HepG2 (cell line): ENCODE measurements at regions of chr4 and their contacts with region 1.

Region 1: DNA sequence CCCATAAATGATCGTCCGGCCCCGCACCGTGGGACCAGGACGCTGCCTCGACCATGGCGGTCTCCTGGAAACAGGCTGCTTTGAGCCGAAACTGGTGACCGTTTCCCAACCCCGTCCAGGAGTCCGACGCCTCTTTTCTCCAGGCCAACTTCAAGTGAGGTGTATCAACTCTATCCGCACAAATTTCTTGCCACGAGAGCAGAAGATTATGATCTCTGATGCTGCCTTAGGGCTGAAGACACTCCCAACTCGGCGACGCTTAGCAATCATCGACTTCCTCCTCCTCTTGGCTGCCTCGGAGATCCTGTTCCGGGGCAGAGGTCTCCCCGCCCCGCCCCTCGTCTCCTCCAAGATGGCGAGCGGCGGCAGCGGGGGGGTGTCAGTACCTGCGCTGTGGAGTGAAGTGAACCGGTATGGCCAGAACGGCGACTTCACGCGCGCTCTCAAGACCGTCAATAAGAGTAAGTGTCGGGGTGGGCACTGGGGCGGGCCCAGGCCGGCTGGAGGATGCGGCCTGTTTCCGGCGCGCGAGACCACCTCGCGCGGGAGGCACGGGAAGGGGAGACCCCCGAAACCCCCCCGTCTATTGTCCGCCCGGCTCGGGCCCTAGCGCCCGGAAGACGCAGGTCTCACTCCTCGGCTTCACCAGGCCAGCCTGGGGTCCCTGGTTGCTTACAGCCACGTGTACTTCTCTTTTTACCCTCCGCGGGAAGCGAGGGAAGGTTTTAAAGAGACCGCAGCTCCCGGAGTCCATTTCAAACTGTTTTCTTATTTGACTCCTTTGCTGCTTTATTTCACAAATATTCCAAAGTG is at the start of gene SRP72:
- DNase-seq: peak; percentile 82
- ATAC-seq: peak; percentile 91
- H3K4me3 ChIP-seq: peak within 1 kb of the TSS; percentile 79 to 90 (median 83)
- H3K27ac ChIP-seq: peak within 1 kb of the TSS; percentile 83
- H3K4me1 ChIP-seq: peaks cover 25% of the 10 kb centered on the region
- H3K27me3 ChIP-seq: no peaks in the 10 kb centered on the region; a peak in 1 of 5 replicates
- CTCF ChIP-seq: no peak
- EP300 ChIP-seq: no peak
- POLR2A ChIP-seq: peak; percentile 88 to 91
- RAD21 ChIP-seq: no peak
- total RNA-seq, gene SRP72: 75.6 and 126 TPM in 2 replicates

Region 2: DNA sequence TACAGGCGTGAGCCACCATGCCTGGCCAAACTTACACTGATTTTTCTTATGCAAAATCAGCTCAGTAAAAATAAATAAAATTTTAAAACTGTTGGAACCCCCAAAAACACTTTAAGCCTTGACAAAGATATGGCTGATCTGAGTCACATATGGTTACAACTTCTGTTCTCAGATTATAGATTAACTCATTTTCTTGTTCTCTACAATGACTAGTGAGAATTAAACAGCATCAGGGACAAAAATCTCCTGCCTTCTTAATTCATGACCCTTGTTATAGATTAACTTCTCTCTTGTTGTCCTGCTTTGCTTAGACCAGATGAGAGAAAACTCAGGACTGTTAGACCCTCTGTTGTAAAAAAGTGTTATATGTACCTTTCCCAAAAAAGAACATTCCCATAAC is 672.1 kb before region 1 on chr4:
- CTCF ChIA-PET with region 1: no interaction called
- POLR2A ChIA-PET with region 1: no interaction called
- in situ Hi-C with region 1: no loop called
- intact Hi-C with region 1: no loop called
- DNase-seq: no peak
- ATAC-seq: no peak
- H3K4me3 ChIP-seq: no peak overlapping the region
- H3K27ac ChIP-seq: no peak overlapping the region
- H3K4me1 ChIP-seq: no peaks in the 10 kb centered on the region
- H3K27me3 ChIP-seq: no peaks in the 10 kb centered on the region
- CTCF ChIP-seq: no peak
- EP300 ChIP-seq: no peak
- POLR2A ChIP-seq: no peak
- RAD21 ChIP-seq: no peak

Region 3: GRCh38 chr4:56387023-56388001 is 80.2 kb before region 1 on chr4 and contains the start of gene AASDH:
- CTCF ChIA-PET with region 1: no interaction called
- POLR2A ChIA-PET with region 1: interaction called, 10 read pairs
- in situ Hi-C with region 1: no loop called
- intact Hi-C with region 1: no loop called
- DNase-seq: peak; percentile 88
- ATAC-seq: peak; percentile 92
- H3K4me3 ChIP-seq: peak within 1 kb of the TSS; percentile 71 to 87 (median 85)
- H3K27ac ChIP-seq: peak within 1 kb of the TSS; percentile 97
- H3K4me1 ChIP-seq: peaks cover 28% of the 10 kb centered on the region
- H3K27me3 ChIP-seq: no peaks in the 10 kb centered on the region; a peak in 1 of 5 replicates
- CTCF ChIP-seq: 0 out of 2 replicates have a peak, but pooled peaks have one; percentile 11
- EP300 ChIP-seq: 0 out of 4 replicates have a peak, but pooled peaks of 1 of the 2 experiments have one; percentile 16
- POLR2A ChIP-seq: peak; percentile 91 to 96
- RAD21 ChIP-seq: peak; percentile 27; the same call in 1 of the 2 replicates
- total RNA-seq, gene AASDH: 12.6 and 16.8 TPM in 2 replicates

Region 4: DNA sequence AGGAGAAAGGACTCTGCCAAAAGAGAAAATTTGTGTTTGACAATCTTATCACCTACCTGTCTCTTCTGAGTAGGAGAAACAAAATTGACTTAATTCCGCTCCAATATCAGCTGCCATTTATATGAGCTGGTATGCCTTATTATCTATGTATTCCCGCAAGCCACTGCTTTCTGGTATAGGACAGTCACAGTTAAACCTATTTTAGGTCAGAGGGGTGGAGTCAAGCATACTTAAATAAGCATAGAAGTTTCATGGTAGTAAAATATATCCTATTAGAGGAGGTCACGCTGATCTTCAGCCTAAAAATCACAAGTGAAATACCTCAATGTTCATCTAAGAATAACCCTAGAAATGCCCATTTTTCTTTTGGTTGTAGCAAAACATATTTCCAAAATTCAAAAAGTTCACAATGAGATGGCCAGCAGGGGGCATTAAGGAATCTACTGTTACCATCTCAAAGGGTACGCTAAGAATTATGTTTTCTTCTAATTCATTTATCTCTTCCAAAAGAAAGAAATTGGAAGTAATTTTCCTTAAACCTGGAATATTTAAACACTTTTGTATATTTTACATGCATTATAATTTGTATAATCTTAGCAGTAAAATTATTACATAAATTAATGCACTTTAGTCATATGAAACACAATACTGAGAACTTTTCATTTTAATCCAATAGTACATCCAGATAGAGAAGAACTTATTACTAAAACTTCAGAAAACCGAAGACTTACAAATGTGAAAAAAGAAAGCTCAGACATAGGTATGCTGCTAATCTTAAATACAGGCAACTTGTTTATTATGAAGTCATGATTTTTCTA is 42.6 kb before region 1 on chr4:
- CTCF ChIA-PET with region 1: no interaction called
- POLR2A ChIA-PET with region 1: no interaction called
- in situ Hi-C with region 1: no loop called
- intact Hi-C with region 1: loop called (anchors 5 kb)
- DNase-seq: no peak
- ATAC-seq: no peak
- H3K4me3 ChIP-seq: no peak overlapping the region
- H3K27ac ChIP-seq: no peak overlapping the region
- H3K4me1 ChIP-seq: peaks cover 26% of the 10 kb centered on the region
- H3K27me3 ChIP-seq: no peaks in the 10 kb centered on the region
- CTCF ChIP-seq: peak; percentile 44
- EP300 ChIP-seq: no peak
- POLR2A ChIP-seq: no peak
- RAD21 ChIP-seq: no peak

Region 5: GRCh38 chr4:56445699-56446098 is 21.8 kb before region 1 on chr4:
- CTCF ChIA-PET with region 1: no interaction called
- POLR2A ChIA-PET with region 1: interaction called, 5 read pairs
- in situ Hi-C with region 1: no loop called
- intact Hi-C with region 1: loop called (anchors 2 kb)
- DNase-seq: no peak
- ATAC-seq: no peak
- H3K4me3 ChIP-seq: no peak overlapping the region
- H3K27ac ChIP-seq: no peak overlapping the region
- H3K4me1 ChIP-seq: peaks cover 52% of the 10 kb centered on the region
- H3K27me3 ChIP-seq: no peaks in the 10 kb centered on the region
- CTCF ChIP-seq: no peak
- EP300 ChIP-seq: no peak
- POLR2A ChIP-seq: no peak; a peak in 1 of 4 replicates
- RAD21 ChIP-seq: no peak

Region 6: GRCh38 chr4:56544573-56545131 is 77.2 kb after region 1 on chr4:
- CTCF ChIA-PET with region 1: no interaction called
- POLR2A ChIA-PET with region 1: no interaction called
- in situ Hi-C with region 1: no loop called
- intact Hi-C with region 1: loop called (anchors 2 kb)
- DNase-seq: peak; percentile 78
- ATAC-seq: peak; percentile 99
- H3K4me3 ChIP-seq: peak overlapping the region; percentile 35 to 67 (median 39)
- H3K27ac ChIP-seq: no peak overlapping the region
- H3K4me1 ChIP-seq: 0 out of 2 replicates have a peak, but pooled peaks cover 11% of the 10 kb centered on the region
- H3K27me3 ChIP-seq: 0 out of 5 replicates have a peak, but pooled peaks cover 0 to 4% of the 10 kb centered on the region in 2 experiments
- CTCF ChIP-seq: peak; percentile 98
- EP300 ChIP-seq: 0 out of 4 replicates have a peak, but pooled peaks of 1 of the 2 experiments have one; percentile 13
- POLR2A ChIP-seq: no peak
- RAD21 ChIP-seq: peak; percentile 91